H1 (cell line): ENCODE measurements at regions of chr3 and their contacts with region 1.

Region 1: GRCh38 chr3:139541156-139541897 is 1.8 kb upstream of the RBP1 start:
- DNase-seq: no peak
- H3K4me3 ChIP-seq: peak overlapping the region in 1 of 4 experiments; percentile 69; a peak in 1 of 8 replicates
- H3K27ac ChIP-seq: no peak overlapping the region
- H3K4me1 ChIP-seq: peaks cover 4 to 23% (median 13%) of the 10 kb centered on the region in 4 experiments; a peak in 6 of 7 replicates
- H3K27me3 ChIP-seq: peaks cover 0 to 24% (median 19%) of the 10 kb centered on the region in 4 experiments; a peak in 4 of 7 replicates
- CTCF ChIP-seq: no peak
- EP300 ChIP-seq: no peak
- POLR2A ChIP-seq: no peak
- RAD21 ChIP-seq: no peak

Region 2: DNA sequence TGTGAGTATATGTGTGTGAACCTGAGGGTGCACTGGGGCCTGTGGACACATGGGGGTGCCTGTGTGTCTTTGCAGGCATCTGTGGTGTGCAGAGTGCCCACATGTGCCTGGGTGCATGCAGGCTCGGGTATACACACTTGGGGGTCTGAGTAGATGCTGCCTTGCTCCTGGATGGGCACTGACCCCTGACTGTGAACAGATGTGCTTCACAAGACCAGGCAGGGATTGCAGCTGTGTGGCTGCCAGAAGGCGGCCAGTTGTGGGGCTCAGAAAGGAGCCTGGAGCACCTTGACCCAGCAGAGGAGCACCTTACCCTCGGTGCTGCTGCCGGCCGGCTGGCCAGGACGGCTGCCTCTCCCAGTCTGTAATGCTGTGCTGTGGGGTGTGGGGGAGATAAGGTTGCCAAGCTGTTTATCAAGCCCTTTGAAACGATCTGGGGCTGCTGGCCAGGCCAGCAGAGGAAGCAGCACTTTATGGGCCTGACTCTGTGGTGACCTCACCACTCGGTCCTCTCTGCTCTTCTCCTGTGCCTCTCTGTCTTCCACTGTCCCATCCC is 253.0 kb before region 1 on chr3:
- CTCF ChIA-PET with region 1: no interaction called
- POLR2A ChIA-PET with region 1: no interaction called
- DNase-seq: no peak
- H3K4me3 ChIP-seq: no peak overlapping the region
- H3K27ac ChIP-seq: no peak overlapping the region
- H3K4me1 ChIP-seq: no peaks in the 10 kb centered on the region; a peak in 1 of 7 replicates
- H3K27me3 ChIP-seq: no peaks in the 10 kb centered on the region
- CTCF ChIP-seq: no peak
- EP300 ChIP-seq: no peak
- POLR2A ChIP-seq: no peak
- RAD21 ChIP-seq: no peak

Region 3: GRCh38 chr3:139552632-139553365 is 11.5 kb after region 1 on chr3:
- CTCF ChIA-PET with region 1: interaction called, 13 read pairs
- POLR2A ChIA-PET with region 1: interaction called, 4 read pairs
- DNase-seq: no peak
- H3K4me3 ChIP-seq: no peak overlapping the region
- H3K27ac ChIP-seq: no peak overlapping the region
- H3K4me1 ChIP-seq: no peaks in the 10 kb centered on the region
- H3K27me3 ChIP-seq: no peaks in the 10 kb centered on the region; a peak in 1 of 7 replicates
- CTCF ChIP-seq: peak in 2 of 3 experiments; percentile 0 to 31; a peak in 2 of 4 replicates
- EP300 ChIP-seq: no peak
- POLR2A ChIP-seq: no peak
- RAD21 ChIP-seq: peak; percentile 13 to 28; a peak in 2 of 4 replicates